Brain microvascular endothelial cell (primary cell): ENCODE measurements at regions of chr14 and their contacts with region 1.

Region 1: DNA sequence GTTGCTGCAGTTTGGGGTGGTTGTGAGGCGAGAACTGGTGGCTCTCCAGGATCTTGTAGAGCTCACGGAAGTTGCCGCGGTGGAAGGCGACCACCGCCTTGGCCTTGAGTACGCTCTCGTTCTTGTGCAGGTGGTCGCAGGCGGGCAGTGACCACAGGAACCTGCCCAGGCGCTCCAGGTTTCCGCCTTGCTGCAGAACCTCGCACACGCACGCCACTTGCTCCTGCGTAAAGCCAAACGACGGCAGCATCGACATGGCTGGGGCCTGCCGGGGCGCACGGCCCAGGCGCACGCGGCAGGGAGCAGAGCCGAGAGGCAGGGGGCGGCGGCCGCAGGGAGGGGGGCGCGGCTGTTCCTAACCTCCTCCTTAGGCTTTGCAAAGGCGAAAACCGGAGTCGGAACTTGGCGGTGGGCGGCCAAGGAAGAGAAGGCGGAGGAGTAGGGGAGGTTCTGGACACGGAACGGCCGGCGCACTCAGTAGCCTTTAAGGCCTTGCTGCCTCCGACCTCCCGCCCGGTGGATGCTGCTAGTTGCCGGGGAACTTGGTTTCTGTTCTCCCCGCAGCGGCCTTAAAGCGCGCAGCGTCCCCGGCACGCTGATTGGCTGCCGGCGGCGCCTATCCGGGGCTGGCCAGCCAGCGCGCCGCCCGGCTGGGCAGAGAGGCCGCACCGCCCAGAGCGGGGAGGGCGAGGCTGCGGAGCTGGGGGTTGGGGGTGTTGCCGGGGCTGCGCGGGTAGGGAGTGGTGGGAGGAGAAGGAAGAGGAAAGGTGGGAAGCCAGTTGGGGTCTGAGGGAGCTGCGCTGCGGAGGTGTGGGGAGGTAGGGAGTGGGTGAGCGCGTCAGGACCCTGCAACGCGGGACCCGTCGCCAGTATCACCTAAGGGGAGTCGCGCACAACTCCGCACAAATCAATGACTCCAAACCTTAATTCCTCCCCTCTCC is at the start of gene SIX1:
- DNase-seq: peak; percentile 86
- H3K4me3 ChIP-seq: peak within 1 kb of the TSS; percentile 76
- H3K27ac ChIP-seq: peak within 1 kb of the TSS; percentile 80
- H3K27me3 ChIP-seq: no peaks in the 10 kb centered on the region
- CTCF ChIP-seq: no peak

Region 2: DNA sequence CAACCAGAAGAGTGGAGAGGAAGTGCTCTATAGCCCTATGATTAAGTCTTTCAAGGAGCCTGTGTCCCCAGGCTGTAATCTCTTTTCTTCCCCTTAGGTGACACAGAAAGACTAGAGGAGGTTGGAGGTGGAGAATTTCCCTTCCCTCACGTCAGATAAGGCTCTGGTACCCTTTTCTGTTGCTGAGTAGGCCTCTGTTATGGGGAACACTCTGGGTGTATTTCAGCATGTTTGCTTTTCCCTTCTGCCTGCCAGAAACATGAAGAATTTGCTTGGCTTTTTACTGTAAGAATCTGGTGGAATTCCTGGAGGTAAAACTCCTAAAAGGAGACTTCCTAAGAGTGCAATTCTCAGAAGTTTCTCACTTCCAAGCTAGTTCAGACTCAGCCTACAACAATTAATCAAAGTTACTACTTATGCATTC is 58.2 kb before region 1 on chr14:
- in situ Hi-C with region 1: no loop called
- DNase-seq: no peak
- H3K4me3 ChIP-seq: no peak overlapping the region
- H3K27ac ChIP-seq: no peak overlapping the region
- H3K27me3 ChIP-seq: no peaks in the 10 kb centered on the region
- CTCF ChIP-seq: no peak

Region 3: GRCh38 chr14:61025251-61026223 is 376.3 kb after region 1 on chr14:
- in situ Hi-C with region 1: loop called (anchors 25 kb)
- DNase-seq: peak; percentile 81
- H3K4me3 ChIP-seq: no peak overlapping the region
- H3K27ac ChIP-seq: peak overlapping the region; percentile 76
- H3K27me3 ChIP-seq: no peaks in the 10 kb centered on the region
- CTCF ChIP-seq: peak; percentile 88

Region 4: GRCh38 chr14:61247935-61248334 is 598.7 kb after region 1 on chr14:
- in situ Hi-C with region 1: loop called (anchors 25 kb)
- DNase-seq: peak; percentile 47
- H3K4me3 ChIP-seq: no peak overlapping the region
- H3K27ac ChIP-seq: no peak overlapping the region
- H3K27me3 ChIP-seq: no peaks in the 10 kb centered on the region
- CTCF ChIP-seq: no peak